ENCODE measurements at regions of chr14 and their contacts with region 1.

Region 1: GRCh38 chr14:73026845-73027542 is at the start of gene ZFYVE1:
- DNase-seq: peak; percentile 97
- ATAC-seq: peak; percentile 100
- total RNA-seq, gene ZFYVE1: 14.1 TPM

Region 2: GRCh38 chr14:73058224-73058921 is 31.4 kb after region 1 on chr14 and contains the start of gene RBM25:
- intact Hi-C with region 1: loop called (anchors 2 kb)
- DNase-seq: peak; percentile 99
- ATAC-seq: peak; percentile 100
- total RNA-seq, gene RBM25: 32.8 TPM

Region 3: DNA sequence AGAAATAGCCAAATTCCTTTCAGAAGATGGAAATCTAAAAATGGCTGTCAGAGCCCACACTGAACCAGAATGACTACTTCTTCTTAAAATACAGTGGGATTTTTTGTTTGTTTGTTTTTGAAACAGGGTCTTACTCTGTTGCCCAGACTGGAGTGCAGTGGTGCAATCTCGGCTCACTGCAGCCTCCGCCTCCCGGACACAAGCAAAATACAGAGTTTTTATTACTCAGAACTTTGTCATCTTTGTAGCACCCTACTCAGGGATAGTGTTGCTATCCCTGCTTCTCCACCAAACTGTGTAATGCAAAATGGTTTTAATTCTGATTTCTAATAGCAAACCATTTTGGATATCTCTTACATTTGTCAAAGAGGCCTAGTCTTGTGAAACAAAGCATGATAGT is 876.0 kb after region 1 on chr14:
- intact Hi-C with region 1: no loop called
- DNase-seq: no peak
- ATAC-seq: no peak

Measured in Right ventricle myocardium inferior (tissue), 1 donor.